Activated CD8-positive, alpha-beta T cell treated with anti-CD3 and anti-CD28 coated beads, Interleukin-2, amount 10 ng/mL, durations not matched to agents 7 days and 5 days (primary cell): ENCODE measurements at regions of chr9 and their contacts with region 1.

Region 1: DNA sequence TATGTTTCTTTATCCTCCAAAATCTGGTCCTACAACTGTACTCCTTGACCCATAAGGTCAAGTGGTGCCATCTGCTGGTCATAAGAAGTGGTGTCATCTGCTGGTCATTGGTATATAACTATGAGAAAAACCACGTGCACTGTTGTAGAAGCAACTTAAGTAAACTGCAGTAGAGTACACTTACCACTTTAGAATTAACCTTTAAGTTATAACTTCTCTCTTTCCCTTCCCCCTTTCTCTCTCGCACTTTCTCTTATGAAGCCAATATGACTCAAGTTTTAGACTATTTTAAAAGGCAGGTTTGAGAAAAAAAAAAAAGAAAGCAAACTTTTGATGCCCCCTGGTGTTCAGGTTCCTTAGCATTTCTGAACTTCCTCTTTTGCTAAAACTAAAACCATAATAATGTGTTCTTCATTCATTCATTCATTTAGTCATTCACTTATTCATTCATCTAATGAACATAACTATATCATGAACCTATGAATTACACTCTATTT is 12.8 kb upstream of the MTAP start:
- DNase-seq: peak; percentile 71
- ATAC-seq: peak; percentile 97
- H3K4me3 Mint-ChIP-seq: peak overlapping the region; percentile 69
- H3K27ac Mint-ChIP-seq: no peak overlapping the region
- H3K4me1 Mint-ChIP-seq: peaks cover 6% of the 10 kb centered on the region
- H3K27me3 Mint-ChIP-seq: peaks cover 25% of the 10 kb centered on the region

Region 2: DNA sequence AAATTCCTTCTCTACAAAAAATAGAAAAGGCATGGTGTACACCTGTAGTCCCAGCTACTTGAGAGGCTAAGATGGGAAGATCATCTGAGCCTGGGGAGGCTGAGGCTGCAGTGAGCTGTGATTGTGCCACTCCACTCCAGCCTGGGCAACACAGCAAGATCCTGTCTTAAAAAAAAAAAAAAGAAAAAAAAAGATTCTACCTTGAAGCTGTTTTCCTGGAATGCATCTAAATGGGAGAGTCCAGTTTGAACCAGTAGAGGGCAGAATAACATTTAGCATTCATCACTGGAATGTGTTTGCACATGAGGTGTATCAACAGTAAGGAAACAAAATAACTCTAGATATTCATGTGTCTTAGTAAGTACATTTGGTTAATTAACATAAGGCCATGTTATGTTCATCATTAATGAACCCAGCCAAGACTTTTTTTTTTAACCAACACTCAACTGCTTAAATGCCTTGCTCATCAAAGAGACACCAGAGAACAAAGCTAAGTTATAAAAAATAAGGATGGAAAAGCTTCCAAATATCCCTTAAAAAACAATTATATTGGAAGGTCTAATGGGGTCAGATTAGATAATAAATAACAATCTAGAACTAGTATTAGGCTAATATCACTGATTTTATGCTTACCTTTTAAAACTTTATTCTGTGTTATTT is 323.6 kb before region 1 on chr9:
- CTCF ChIA-PET with region 1: interaction called, 14 read pairs
- POLR2A ChIA-PET with region 1: no interaction called
- DNase-seq: peak; percentile 43
- ATAC-seq: peak; percentile 65
- H3K4me3 Mint-ChIP-seq: no peak overlapping the region
- H3K27ac Mint-ChIP-seq: no peak overlapping the region
- H3K4me1 Mint-ChIP-seq: no peaks in the 10 kb centered on the region
- H3K27me3 Mint-ChIP-seq: peaks cover 15% of the 10 kb centered on the region

Region 3: GRCh38 chr9:21831961-21832509 is 42.4 kb after region 1 on chr9:
- CTCF ChIA-PET with region 1: no interaction called
- POLR2A ChIA-PET with region 1: no interaction called
- DNase-seq: no peak
- ATAC-seq: peak; percentile 55
- H3K4me3 Mint-ChIP-seq: no peak overlapping the region
- H3K27ac Mint-ChIP-seq: no peak overlapping the region
- H3K4me1 Mint-ChIP-seq: peaks cover 11% of the 10 kb centered on the region
- H3K27me3 Mint-ChIP-seq: no peaks in the 10 kb centered on the region

Region 4: DNA sequence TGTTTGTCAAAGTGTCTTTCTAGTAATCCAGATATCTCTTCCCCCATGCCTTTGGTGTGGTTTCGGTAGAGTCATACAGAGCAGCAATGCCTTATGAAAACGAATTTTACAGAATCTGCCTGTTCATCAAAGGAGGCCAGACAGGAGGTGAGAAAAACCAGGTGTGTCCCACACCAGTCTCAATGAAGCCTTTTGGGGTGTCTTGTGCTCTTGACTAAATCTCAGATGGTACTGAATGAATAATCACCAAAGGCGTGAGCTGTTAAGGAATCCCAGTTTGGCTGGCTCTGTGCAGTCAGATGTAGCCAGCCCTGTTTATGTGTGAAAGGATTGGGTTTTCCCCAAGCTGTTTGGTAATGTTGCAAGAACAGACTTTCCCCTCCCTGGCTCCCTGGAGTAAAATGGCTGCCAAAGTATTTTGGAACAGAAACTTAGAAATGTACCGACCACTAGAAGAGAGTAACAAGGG is 290.3 kb after region 1 on chr9:
- CTCF ChIA-PET with region 1: no interaction called
- POLR2A ChIA-PET with region 1: no interaction called
- DNase-seq: peak; percentile 82
- ATAC-seq: peak; percentile 94
- H3K4me3 Mint-ChIP-seq: peak overlapping the region; percentile 7
- H3K27ac Mint-ChIP-seq: peak overlapping the region; percentile 84
- H3K4me1 Mint-ChIP-seq: peaks cover 66% of the 10 kb centered on the region
- H3K27me3 Mint-ChIP-seq: peaks cover 7% of the 10 kb centered on the region